AG04450 (cell line): ENCODE measurements at regions of chr2 and their contacts with region 1.

Region 1: DNA sequence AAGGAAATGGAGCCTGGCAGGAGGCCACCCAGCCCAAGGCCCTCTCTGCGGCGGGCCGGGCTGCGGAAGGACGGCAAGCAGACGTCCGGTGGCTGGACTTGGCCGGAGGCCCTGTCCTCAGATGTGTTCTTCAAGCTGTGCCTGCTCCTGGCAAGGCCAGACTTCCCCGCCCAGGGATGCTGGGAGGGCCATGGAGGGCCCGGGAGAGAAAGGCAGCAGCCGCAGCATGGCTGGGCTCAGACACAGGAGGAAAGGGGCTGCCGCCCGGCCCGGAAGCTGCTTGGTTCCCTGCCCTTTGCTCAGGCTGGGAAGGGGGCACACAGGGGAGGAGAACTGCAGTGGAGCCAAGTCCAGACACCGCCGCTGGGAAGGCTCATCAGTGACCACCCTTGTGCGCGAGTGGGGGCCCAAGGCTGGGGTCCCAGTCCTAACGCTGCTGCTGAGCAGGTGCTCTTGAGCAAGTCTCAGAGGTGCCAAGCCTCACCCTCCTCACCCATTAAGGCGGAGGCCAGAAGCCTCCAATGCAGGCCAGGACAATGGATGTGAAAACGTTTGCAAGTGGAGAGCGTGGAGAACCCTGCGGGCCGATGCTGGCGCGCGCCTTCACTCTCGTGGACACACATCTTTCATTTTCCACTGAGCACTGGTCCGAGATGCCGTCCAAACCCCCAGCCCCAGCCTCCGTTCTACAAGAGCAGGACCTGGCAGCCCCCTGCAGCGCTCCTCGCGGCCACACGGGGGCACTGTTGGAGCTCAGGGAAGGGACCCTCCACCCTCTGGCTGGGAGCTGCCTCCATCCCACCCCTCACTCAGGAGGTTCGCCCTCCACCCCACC is 7.9 kb downstream of the CROCC2 start:
- DNase-seq: no peak
- H3K4me3 ChIP-seq: no peak overlapping the region
- H3K27ac ChIP-seq: no peak overlapping the region
- H3K27me3 ChIP-seq: no peaks in the 10 kb centered on the region
- CTCF ChIP-seq: peak; percentile 91

Region 2: DNA sequence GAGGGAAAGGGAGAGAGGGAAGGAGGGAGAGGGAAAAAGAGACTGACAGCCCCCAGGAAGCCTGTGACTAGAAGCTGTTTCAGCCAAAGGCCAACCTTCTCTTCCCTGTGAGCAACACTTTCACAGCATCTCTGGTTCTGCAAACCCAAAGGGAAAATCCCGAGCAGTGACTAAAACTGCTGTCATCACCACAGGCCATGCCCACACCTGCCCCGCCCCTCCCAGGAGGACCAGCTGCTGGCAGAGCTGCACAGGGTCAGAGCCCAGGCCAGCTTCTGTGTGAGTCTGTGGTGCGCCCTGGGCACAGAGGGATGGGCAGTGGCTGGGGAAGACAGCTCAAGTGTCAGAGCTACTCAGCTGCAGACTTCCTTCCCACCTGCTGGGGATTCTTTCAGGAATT is 708.7 kb before region 1 on chr2:
- CTCF ChIA-PET with region 1: no interaction called
- POLR2A ChIA-PET with region 1: no interaction called
- DNase-seq: no peak
- H3K4me3 ChIP-seq: no peak overlapping the region
- H3K27ac ChIP-seq: no peak overlapping the region
- H3K27me3 ChIP-seq: peaks cover 28% of the 10 kb centered on the region
- CTCF ChIP-seq: no peak

Region 3: DNA sequence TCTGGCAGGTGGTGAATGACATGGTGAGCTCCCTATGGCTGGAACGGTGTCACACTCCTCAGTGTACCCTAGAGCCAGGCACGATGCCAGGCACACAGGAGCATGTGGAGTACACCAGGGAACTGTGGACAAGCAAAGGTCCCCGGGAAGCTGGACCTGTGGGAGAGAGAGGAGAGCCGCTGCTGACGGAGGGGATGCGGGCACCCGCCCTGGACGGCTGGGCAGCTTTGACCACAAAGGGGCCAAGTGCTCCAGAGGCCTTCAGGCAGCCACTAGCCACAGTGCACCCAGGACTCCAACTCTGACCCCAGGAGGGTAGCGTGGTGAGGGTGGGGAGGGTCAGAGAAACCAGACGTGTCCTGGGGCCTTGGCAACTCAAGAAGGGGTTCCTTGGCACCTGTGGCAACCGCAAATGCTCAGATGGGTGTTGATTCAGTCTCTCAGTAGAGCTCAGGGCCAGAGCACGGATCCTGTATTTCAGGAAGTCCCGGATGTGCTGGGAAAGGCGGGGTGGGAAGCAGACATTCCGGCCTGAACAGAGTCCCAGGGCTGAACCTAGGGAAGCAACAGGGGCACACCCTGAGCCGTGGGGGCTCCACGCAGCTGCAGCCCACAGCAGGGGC is 15.8 kb before region 1 on chr2:
- CTCF ChIA-PET with region 1: interaction called, 12 read pairs
- POLR2A ChIA-PET with region 1: interaction called, 5 read pairs
- DNase-seq: no peak
- H3K4me3 ChIP-seq: no peak overlapping the region
- H3K27ac ChIP-seq: no peak overlapping the region
- H3K27me3 ChIP-seq: peaks cover 7% of the 10 kb centered on the region
- CTCF ChIP-seq: no peak

Region 4: DNA sequence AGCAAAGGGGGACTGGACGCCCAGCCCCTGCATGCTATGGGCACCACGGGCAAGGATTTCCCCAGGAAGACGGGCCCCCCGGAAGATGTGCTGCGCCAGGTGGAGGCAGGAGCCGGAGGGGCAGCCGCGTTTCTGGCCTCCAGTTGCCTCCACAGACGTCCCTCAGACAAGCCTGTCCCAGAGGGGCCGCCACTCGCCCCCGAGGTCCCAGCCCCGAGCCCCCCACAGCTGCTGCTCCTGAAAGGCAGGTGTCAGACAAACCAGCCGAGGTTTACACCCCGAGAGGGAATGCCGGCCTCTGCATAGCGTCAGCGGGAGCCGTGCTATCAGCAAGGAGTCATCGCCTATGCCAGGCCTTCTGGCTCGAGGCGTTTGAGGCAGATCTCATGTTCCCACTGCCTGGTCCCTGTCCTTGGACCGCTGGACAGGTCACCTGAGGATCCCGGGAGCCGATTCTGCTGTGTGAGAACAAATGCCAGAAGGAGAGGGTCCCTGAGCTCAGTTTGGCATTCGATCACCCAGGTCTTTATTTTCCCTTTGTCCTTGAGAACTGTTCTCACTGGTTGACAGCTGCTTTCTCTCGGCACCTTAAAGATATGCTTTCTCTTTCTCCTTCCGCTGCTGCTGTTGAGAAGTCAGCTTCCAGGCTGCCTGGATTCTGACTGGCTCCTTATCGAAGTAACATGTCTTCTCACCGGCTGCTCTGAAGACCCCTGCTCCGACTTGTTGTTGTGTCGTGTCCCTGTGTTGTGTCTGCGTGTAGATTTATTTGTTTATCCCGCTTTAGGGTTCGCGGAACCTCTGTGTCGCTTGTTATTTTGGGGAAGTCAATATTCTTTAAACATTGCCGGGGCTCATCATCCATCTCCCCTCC is 12.7 kb after region 1 on chr2:
- CTCF ChIA-PET with region 1: interaction called, 19 read pairs
- POLR2A ChIA-PET with region 1: no interaction called
- DNase-seq: no peak
- H3K4me3 ChIP-seq: peak overlapping the region; percentile 51
- H3K27ac ChIP-seq: peak overlapping the region; percentile 52
- H3K27me3 ChIP-seq: peaks cover 19% of the 10 kb centered on the region
- CTCF ChIP-seq: no peak